ENCODE measurements at regions of chr18 and their contacts with region 1.

Region 1: GRCh38 chr18:8097927-8098326 is 511.3 kb upstream of the RAB12 start:
- DNase-seq: no peak
- H3K4me3 ChIP-seq: no peak overlapping the region
- H3K27ac ChIP-seq: no peak overlapping the region
- H3K4me1 ChIP-seq: no peaks in the 10 kb centered on the region
- H3K27me3 ChIP-seq: no peaks in the 10 kb centered on the region
- CTCF ChIP-seq: no peak
- POLR2A ChIP-seq: no peak

Region 2: DNA sequence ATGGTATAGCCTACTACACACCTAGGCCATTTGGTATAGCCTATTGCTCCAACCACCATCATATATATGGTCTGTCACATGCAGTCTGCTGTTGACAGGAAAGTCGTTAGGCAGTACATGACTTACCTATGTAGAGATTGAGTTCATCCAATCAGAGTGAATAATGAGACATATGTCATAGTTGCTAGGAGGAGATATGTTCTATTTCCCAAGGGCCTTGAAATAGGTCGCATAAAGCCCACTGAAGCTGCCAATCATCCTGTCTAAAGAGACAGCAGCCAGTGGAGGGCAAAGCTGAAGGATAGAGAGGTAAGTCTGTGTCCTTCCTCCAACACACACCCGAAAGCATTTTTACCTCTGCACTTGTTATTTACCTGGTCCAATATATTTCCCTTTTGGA is 267.5 kb before region 1 on chr18:
- intact Hi-C with region 1: no loop called
- DNase-seq: no peak
- H3K4me3 ChIP-seq: no peak overlapping the region
- H3K27ac ChIP-seq: no peak overlapping the region
- H3K4me1 ChIP-seq: no peaks in the 10 kb centered on the region
- H3K27me3 ChIP-seq: no peaks in the 10 kb centered on the region
- CTCF ChIP-seq: no peak
- POLR2A ChIP-seq: no peak

Region 3: DNA sequence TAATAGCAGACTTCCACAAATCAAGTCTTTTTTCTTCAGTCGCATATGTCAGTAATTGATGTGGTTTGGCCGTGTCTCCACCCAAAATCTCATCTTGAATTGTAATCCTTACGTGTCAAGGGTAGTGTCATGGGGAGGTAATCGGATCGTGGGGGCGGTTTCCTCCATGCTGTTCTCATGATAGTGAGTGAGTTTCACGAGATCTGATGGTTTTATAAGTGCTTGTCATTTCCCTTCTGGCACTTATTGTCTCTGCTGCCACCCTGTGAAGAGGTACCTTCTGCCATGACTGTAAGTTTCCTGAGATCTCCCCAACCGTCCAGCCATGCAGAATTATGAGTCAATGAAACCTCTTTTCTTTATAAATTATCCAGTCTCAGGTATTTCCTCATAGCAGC is 52.0 kb before region 1 on chr18:
- intact Hi-C with region 1: loop called (anchors 5 kb)
- DNase-seq: no peak
- H3K4me3 ChIP-seq: no peak overlapping the region
- H3K27ac ChIP-seq: no peak overlapping the region
- H3K4me1 ChIP-seq: peaks cover 23 to 34% of the 10 kb centered on the region in 2 donors
- H3K27me3 ChIP-seq: no peaks in the 10 kb centered on the region
- CTCF ChIP-seq: no peak
- POLR2A ChIP-seq: no peak

Region 4: GRCh38 chr18:8163286-8163959 is 65.5 kb after region 1 on chr18:
- intact Hi-C with region 1: no loop called
- DNase-seq: no peak
- H3K4me3 ChIP-seq: no peak overlapping the region
- H3K27ac ChIP-seq: peak overlapping the region; percentile 4 to 28 (median 14)
- H3K4me1 ChIP-seq: peaks cover 26 to 42% of the 10 kb centered on the region in 2 donors
- H3K27me3 ChIP-seq: no peaks in the 10 kb centered on the region
- CTCF ChIP-seq: no peak
- POLR2A ChIP-seq: no peak

Measured in thyroid gland (tissue), 4 donors.